ENCODE measurements at regions of chr11 and their contacts with region 1.

Region 1: GRCh38 chr11:123020968-123021367 is 39.3 kb upstream of the BSX start:
- DNase-seq: peak; percentile 53
- ATAC-seq: peak; percentile 86
- H3K4me3 Mint-ChIP-seq: no peak overlapping the region
- H3K27ac Mint-ChIP-seq: no peak overlapping the region
- H3K4me1 Mint-ChIP-seq: peaks cover 9% of the 10 kb centered on the region
- H3K27me3 Mint-ChIP-seq: peaks cover 9% of the 10 kb centered on the region

Region 2: DNA sequence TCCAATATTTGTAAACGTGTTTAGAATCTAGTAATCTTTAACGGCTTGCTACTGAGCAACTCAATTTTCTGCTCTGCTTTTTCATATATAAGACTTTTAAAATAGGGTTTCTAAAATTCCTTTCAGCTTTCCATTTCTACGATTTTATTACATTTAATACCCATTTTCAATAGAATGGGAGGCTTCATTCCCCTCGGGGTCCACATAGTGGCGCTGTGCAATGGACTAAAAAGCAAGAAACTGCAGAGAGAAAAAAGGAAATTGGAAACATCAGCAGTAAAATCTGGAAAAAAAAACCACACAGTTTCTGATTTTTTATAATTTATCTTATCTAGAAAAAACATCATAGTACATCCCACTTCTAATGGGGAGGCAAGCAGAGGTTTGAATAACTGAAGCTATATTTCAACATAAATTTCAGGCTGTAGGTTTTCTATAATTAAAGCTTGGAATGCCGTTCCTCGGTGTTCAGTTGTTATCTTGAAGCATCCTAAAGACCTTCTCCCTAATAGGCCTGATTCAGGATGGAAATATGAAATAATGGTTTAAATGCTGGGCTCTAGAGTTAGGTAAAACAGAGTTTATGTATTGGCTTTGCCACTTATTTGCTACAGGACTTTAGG is 157.2 kb before region 1 on chr11:
- CTCF ChIA-PET with region 1: interaction called, 215 read pairs
- DNase-seq: no peak
- ATAC-seq: no peak
- H3K4me3 Mint-ChIP-seq: no peak overlapping the region
- H3K27ac Mint-ChIP-seq: no peak overlapping the region
- H3K4me1 Mint-ChIP-seq: no peaks in the 10 kb centered on the region
- H3K27me3 Mint-ChIP-seq: no peaks in the 10 kb centered on the region

Region 3: GRCh38 chr11:122879785-122880184 is 141.2 kb before region 1 on chr11:
- CTCF ChIA-PET with region 1: interaction called, 215 read pairs
- DNase-seq: no peak
- ATAC-seq: no peak
- H3K4me3 Mint-ChIP-seq: no peak overlapping the region
- H3K27ac Mint-ChIP-seq: no peak overlapping the region
- H3K4me1 Mint-ChIP-seq: peaks cover 34% of the 10 kb centered on the region
- H3K27me3 Mint-ChIP-seq: peaks cover 15% of the 10 kb centered on the region

Region 4: GRCh38 chr11:122910775-122911174 is 110.2 kb before region 1 on chr11:
- CTCF ChIA-PET with region 1: interaction called, 15 read pairs
- DNase-seq: no peak
- ATAC-seq: no peak
- H3K4me3 Mint-ChIP-seq: no peak overlapping the region
- H3K27ac Mint-ChIP-seq: no peak overlapping the region
- H3K4me1 Mint-ChIP-seq: no peaks in the 10 kb centered on the region
- H3K27me3 Mint-ChIP-seq: no peaks in the 10 kb centered on the region

Region 5: DNA sequence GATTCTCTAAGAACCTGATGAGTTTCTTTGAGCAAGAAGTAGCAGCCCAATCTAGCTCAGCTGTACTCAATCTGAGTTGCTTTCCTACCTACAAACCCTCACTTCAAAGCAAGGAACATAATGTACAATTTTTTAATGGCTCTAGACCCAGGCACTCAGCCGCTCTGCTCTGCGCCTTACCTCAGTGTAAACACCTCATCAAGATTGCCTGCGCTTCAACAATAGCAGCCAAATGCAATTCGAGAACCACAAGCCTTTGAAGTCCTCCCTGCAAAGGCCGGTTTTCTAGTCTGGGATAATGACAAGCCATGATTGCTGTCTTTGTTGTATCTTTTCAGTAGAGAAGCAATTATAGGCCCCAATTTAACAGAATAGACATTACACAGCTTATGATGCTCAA is 100.4 kb before region 1 on chr11:
- CTCF ChIA-PET with region 1: interaction called, 11 read pairs
- DNase-seq: no peak
- ATAC-seq: no peak
- H3K4me3 Mint-ChIP-seq: no peak overlapping the region
- H3K27ac Mint-ChIP-seq: no peak overlapping the region
- H3K4me1 Mint-ChIP-seq: no peaks in the 10 kb centered on the region
- H3K27me3 Mint-ChIP-seq: no peaks in the 10 kb centered on the region

Measured in activated CD8-positive, alpha-beta memory T cell treated with anti-CD3 and anti-CD28 coated beads, Interleukin-2, amount 10 ng/mL, durations not matched to agents 7 days and 5 days (primary cell).